Common myeloid progenitor, CD34-positive (primary cell): ENCODE measurements at regions of chr2 and their contacts with region 1.

Region 1: DNA sequence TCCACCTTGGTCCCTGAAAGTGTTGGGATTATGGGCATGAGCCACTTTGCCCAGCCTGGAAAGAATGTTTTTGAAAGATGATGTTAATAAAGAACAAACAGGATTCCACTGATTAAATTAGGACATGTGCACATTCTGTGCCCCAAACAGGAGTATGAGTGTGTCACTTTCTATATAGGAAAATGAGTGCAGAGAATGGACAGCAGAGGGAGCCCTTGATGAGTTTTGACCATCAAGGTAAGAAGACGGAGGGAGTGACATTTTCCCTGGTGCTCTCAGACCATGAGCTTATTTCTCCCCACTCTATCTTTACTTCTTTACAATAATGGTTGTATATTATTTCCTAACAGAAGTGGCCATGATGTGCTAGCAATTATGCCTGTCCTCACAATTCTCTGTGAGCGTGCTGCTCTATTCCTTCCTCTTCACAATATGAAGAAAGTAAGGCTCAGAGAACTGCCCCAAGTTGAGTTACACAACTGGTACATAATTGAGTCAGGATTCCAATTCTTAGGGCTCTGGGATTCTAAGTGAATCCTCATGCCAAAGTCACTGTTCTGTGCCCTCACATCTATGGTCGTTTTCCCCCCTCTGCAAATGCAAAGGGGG is 20.6 kb downstream of the RPL37A start:
- DNase-seq: peak; percentile 74 to 88 (median 80)
- H3K4me3 ChIP-seq: no peak overlapping the region
- H3K27ac ChIP-seq: no peak overlapping the region
- H3K4me1 ChIP-seq: no peaks in the 10 kb centered on the region
- H3K27me3 ChIP-seq: no peaks in the 10 kb centered on the region

Region 2: DNA sequence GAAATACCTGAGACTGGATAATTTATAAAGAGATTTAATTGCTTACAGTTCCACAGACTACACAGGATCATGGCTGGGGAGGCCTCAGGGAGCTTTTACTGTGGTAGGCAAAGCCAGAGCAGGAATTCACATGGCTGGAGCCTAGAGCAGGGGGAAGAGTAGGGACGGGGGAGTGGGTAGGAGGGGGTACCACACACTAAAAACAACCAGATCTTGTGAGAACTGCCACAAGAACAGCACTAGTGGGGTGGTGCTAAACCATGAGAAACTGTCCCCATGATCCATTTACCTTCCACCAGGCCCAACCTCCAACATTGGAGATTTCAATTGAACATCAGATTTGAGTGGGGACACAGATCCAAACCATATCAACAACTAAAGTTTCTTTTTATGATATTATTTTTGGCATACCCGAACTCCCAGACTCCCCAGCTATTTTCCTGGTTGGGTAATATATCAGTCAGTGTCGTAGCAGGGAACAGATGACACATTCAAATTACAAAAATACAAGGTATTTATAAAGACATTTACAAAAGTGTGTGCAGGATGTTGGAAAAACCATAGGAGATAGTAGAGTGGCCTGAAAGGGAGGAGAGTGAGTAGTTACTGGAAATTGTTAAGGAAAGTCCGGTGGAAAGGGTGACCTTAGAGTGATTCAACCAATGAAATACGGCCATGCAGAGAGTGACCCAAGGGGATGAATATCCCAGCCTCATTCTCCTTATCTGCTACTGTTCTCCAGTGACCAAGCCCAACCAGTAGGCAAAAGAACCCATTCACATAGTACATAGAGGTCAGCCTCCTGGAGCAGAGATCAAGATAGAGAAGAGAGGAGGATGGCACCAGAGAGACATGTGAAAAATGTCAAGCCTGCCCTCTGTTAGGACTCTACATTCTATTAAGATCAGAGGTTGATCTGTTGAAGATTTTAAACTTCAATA is 11.8 kb before region 1 on chr2:
- CTCF ChIA-PET with region 1: interaction called, 11 read pairs
- POLR2A ChIA-PET with region 1: no interaction called
- DNase-seq: no peak
- H3K4me3 ChIP-seq: no peak overlapping the region
- H3K27ac ChIP-seq: no peak overlapping the region
- H3K4me1 ChIP-seq: peaks cover 0 to 4% (median 0%) of the 10 kb centered on the region in 4 experiments
- H3K27me3 ChIP-seq: no peaks in the 10 kb centered on the region

Region 3: DNA sequence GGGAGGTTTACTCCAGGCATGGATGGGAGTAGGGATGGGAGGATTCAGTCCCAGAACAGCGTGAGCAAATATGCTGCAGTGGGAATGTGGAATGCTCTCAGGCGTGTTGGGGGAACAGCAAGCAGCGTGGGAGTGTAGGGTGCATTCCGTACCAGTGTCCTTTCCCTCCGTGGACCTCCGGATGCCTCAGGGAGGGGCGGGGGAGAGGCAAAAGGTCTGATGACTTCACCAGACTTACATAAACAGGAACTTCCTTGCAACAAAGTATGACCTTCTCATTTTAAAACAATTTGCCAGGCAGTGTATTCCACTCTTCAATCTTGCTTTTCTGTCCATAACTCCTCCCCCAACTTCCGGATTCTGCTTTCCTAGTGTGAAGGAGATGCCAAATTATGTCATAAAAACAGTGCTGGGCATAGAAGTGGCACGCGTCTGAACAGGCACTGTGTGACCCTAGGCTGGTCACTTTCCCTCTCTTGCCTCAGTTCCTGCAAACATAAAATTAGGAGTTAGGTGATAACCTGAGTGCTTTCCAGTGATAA is 16.3 kb after region 1 on chr2:
- CTCF ChIA-PET with region 1: interaction called, 12 read pairs
- POLR2A ChIA-PET with region 1: no interaction called
- DNase-seq: peak; percentile 19 to 77 (median 66)
- H3K4me3 ChIP-seq: peak overlapping the region in 1 of 7 experiments; percentile 17
- H3K27ac ChIP-seq: no peak overlapping the region
- H3K4me1 ChIP-seq: peaks cover 0 to 9% (median 6%) of the 10 kb centered on the region in 4 experiments
- H3K27me3 ChIP-seq: no peaks in the 10 kb centered on the region

Region 4: DNA sequence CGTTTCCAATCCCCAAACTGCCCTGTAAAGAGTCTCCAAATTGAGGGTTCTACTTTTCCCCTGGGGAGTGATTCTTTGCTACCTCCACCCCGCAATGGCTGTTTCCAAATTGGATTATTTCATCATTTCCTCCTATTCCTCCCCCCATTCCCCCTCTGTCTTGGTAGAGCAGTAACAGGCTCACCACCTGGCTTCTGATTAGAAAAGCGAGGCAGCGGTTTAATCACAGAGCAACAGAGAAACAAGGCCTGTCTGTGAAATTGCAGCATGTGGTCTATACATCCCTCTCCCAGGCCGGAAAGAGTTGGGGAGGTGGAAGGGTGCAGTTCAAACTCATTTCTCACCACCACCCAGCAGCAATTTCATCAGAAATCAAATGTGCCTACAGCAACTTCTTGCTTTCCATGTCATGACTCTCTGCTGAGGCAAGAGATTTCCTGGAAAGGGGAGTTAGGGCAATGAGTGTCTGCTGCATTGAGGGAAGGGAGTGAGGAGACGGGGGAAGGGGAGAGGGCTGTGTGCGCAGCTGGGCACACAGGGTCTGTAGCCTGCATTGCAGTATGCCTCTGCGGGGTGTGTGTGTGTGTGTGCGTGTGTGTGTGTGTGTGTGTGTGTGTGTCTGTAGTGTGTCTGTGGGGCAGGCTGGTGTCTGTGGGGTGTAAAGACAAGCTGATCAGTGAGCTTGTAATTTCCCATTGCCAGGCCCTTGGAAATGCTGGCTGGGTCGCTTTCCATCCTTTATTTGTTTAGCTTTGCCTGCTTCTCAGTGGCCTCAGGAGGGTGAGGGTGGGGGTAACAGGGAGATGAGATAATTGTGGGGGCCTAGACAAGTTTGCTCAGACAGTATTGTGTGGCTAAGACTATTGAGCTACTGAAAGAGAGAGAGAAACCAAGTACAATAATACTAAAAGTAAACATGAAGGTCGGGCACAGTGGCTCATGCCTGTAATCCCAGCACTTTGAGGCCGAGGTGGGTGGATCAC is 100.4 kb after region 1 on chr2:
- CTCF ChIA-PET with region 1: interaction called, 10 read pairs
- POLR2A ChIA-PET with region 1: no interaction called
- DNase-seq: no peak
- H3K4me3 ChIP-seq: no peak overlapping the region
- H3K27ac ChIP-seq: no peak overlapping the region
- H3K4me1 ChIP-seq: peaks cover 0 to 14% (median 3%) of the 10 kb centered on the region in 4 experiments
- H3K27me3 ChIP-seq: peaks cover 0 to 3% (median 0%) of the 10 kb centered on the region in 5 experiments

Region 5: DNA sequence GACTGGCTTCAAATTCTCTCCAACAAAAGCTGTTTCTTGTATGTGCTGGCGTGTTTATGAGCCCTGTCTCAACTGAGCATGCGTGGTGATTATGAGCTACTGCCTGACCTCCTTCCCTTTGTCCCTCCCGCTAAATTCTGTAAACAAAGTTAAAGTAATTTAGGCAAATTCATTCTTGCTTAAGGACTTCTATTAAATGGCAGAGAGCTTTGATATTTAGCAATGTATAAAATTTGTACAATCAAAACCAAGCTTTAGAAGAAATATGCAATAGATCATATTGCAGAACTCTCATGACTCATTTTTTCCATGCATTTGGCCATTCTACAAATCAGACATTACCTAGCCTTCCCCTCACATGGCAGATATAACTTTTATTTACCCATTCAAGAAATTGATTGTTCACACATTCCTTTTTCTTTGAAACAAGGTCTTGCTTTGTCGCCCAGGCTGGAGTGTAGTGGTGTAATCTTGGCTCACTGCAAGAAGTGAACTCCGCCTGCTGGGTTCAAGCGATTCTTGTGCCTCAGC is 132.2 kb after region 1 on chr2:
- CTCF ChIA-PET with region 1: interaction called, 24 read pairs
- POLR2A ChIA-PET with region 1: no interaction called
- DNase-seq: no peak
- H3K4me3 ChIP-seq: no peak overlapping the region
- H3K27ac ChIP-seq: no peak overlapping the region
- H3K4me1 ChIP-seq: no peaks in the 10 kb centered on the region
- H3K27me3 ChIP-seq: peaks cover 0 to 4% (median 0%) of the 10 kb centered on the region in 5 experiments

Region 6: GRCh38 chr2:216666461-216667233 is 147.4 kb after region 1 on chr2:
- CTCF ChIA-PET with region 1: interaction called, 433 read pairs
- POLR2A ChIA-PET with region 1: interaction called, 3 read pairs
- DNase-seq: peak; percentile 47 to 76 (median 67)
- H3K4me3 ChIP-seq: no peak overlapping the region
- H3K27ac ChIP-seq: no peak overlapping the region
- H3K4me1 ChIP-seq: peaks cover 0 to 4% (median 1%) of the 10 kb centered on the region in 4 experiments
- H3K27me3 ChIP-seq: peaks cover 0 to 6% (median 0%) of the 10 kb centered on the region in 5 experiments